ENCODE measurements at regions of chr9 and their contacts with region 1.

Region 1: GRCh38 chr9:127199001-127199791 is 65.4 kb upstream of the GARNL3 start:
- DNase-seq: peak; percentile 73 to 81
- ATAC-seq: peak; percentile 40 to 77; a peak in 5 of 6 replicates
- H3K4me3 ChIP-seq: no peak overlapping the region
- H3K27ac ChIP-seq: peak overlapping the region in 1 of 2 experiments; percentile 64; a peak in 2 of 6 replicates
- H3K4me1 ChIP-seq: peaks cover 17% of the 10 kb centered on the region
- CTCF ChIP-seq: peak; percentile 92
- EP300 ChIP-seq: no peak
- POLR2A ChIP-seq: no peak
- RAD21 ChIP-seq: peak; percentile 97

Region 2: GRCh38 chr9:126965541-126966428 is 233.4 kb before region 1 on chr9:
- CTCF ChIA-PET with region 1: interaction called, 373 read pairs
- POLR2A ChIA-PET with region 1: no interaction called
- DNase-seq: peak; percentile 67 to 80
- ATAC-seq: peak; percentile 99 to 100
- H3K4me3 ChIP-seq: no peak overlapping the region
- H3K27ac ChIP-seq: no peak overlapping the region
- H3K4me1 ChIP-seq: peaks cover 4% of the 10 kb centered on the region; the same call in 1 of the 3 replicates
- CTCF ChIP-seq: peak; percentile 87
- EP300 ChIP-seq: no peak
- POLR2A ChIP-seq: no peak
- RAD21 ChIP-seq: peak; percentile 91 to 92

Region 3: DNA sequence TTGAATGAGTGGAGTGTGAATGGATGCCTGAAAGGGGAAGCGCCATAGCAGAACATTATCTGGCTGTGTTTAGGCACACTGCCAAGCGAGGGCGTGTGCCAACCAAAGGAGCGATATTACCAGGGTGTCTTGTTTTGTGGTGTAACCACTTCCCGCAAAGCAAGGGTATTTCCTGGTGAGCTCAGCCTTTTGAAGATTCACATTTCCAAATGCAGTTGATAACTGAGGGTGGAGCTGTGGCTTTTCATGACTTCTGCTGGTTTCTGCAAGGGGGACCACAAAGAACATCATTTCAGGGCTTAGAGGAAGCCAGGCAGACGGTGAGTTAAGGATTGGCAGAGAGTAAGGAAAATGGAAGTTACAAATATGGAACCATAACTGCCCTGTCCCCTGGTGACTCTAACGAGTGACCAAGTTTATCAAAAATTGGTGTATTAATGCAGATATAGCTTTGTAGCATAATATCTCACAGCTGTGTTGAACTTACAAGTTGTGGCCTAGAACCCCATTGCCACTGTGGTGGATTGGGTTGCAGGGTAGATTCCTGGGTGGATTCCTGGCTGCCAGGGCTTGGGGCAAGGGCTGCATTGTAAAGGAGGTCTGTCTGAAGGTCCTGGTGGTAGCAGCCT is 213.2 kb before region 1 on chr9:
- CTCF ChIA-PET with region 1: interaction called, 12 read pairs
- POLR2A ChIA-PET with region 1: no interaction called
- DNase-seq: peak; percentile 24 to 67
- ATAC-seq: peak; percentile 21 to 66; a peak in 4 of 6 replicates
- H3K4me3 ChIP-seq: no peak overlapping the region
- H3K27ac ChIP-seq: peak overlapping the region; percentile 54 to 58
- H3K4me1 ChIP-seq: peaks cover 31% of the 10 kb centered on the region
- CTCF ChIP-seq: no peak
- EP300 ChIP-seq: no peak
- POLR2A ChIP-seq: no peak
- RAD21 ChIP-seq: 0 out of 5 replicates have a peak, but pooled peaks of 1 of the 2 experiments have one; percentile 16

Region 4: DNA sequence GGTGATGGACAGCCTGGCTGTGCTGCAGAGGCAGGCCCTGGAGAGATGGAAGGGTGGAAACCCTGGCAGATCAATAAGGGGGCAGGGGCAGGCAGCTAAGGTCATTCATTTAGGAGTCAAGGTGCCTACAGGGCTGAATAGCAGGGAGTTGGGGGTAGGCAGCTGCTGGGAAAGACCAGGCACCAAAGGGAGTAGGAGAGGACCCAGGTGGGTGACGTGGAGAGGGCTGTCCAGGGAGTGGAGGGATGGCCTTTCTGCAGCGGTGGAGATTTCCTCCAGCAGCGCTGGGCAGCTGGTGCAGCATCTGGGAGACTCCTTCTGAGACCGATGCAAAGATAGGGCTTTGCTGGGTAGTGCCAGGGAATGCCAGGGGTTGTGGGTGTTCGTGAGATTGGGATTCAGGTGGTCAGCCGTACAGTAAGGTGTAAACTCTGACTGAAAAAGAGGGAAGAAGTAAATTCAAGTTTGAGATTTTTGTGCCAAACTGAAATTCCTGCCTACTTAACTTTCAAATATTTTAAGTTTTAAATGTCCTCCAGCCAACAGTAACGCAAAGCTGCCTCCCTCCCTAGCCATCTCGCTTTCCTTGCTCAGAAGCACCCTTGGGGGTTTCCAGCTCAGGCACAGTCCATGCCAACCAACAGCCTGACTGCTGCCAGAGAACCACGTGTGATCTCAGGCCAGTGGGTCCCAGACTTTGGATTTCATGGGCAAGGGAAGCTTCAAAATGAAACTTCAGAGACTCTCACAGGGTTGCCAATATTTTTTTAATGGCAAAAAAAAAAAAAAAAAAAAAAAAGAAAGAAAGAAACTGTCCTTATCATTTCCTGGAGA is 58.1 kb before region 1 on chr9:
- CTCF ChIA-PET with region 1: no interaction called
- POLR2A ChIA-PET with region 1: no interaction called
- DNase-seq: no peak
- ATAC-seq: no peak
- H3K4me3 ChIP-seq: no peak overlapping the region
- H3K27ac ChIP-seq: no peak overlapping the region
- H3K4me1 ChIP-seq: peaks cover 11% of the 10 kb centered on the region; the same call in 2 of the 3 replicates
- CTCF ChIP-seq: no peak
- EP300 ChIP-seq: no peak
- POLR2A ChIP-seq: no peak
- RAD21 ChIP-seq: no peak

Region 5: GRCh38 chr9:127178686-127179632 is 20.2 kb before region 1 on chr9:
- CTCF ChIA-PET with region 1: interaction called, 19 read pairs
- POLR2A ChIA-PET with region 1: no interaction called
- DNase-seq: no peak
- ATAC-seq: no peak
- H3K4me3 ChIP-seq: no peak overlapping the region
- H3K27ac ChIP-seq: no peak overlapping the region
- H3K4me1 ChIP-seq: no peaks in the 10 kb centered on the region
- CTCF ChIP-seq: no peak
- EP300 ChIP-seq: no peak
- POLR2A ChIP-seq: no peak
- RAD21 ChIP-seq: no peak

Region 6: GRCh38 chr9:127214421-127215267 is 15.4 kb after region 1 on chr9:
- CTCF ChIA-PET with region 1: interaction called, 119 read pairs
- POLR2A ChIA-PET with region 1: no interaction called
- DNase-seq: peak; percentile 58 to 87
- ATAC-seq: peak; percentile 81 to 87
- H3K4me3 ChIP-seq: no peak overlapping the region
- H3K27ac ChIP-seq: no peak overlapping the region
- H3K4me1 ChIP-seq: no peaks in the 10 kb centered on the region
- CTCF ChIP-seq: peak; percentile 79
- EP300 ChIP-seq: no peak
- POLR2A ChIP-seq: no peak
- RAD21 ChIP-seq: peak; percentile 77 to 80

Region 7: DNA sequence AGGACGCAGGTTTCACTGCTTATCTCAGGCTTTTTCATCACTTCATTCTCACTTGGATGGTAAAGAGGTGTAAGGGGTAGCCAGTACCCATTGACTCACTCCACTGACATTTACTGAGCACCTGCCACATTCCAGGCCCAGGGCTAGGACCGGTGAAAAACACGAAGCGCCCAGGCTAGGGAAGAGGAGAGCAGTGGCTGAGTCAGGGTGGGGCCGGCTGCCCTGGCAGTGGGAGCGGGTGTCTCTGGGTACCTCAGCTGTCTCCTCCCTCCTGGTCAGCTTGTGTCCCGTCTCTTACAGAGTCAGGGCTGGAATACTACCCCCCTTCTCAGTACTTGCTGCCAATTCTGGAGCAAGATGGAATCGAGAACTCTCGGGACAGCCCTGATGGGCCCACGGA is 274.3 kb after region 1 on chr9:
- CTCF ChIA-PET with region 1: no interaction called
- POLR2A ChIA-PET with region 1: no interaction called
- DNase-seq: no peak
- ATAC-seq: peak in 1 of 2 experiments; percentile 30; a peak in 2 of 6 replicates
- H3K4me3 ChIP-seq: no peak overlapping the region
- H3K27ac ChIP-seq: no peak overlapping the region
- H3K4me1 ChIP-seq: no peaks in the 10 kb centered on the region
- CTCF ChIP-seq: no peak
- EP300 ChIP-seq: no peak
- POLR2A ChIP-seq: no peak
- RAD21 ChIP-seq: no peak

Measured in A549 (cell line).